ENCODE measurements at regions of chr11 and their contacts with region 1.

Region 1: GRCh38 chr11:130002846-130003716 is 446 bp upstream of the PRDM10 start:
- DNase-seq: peak; percentile 95 to 98 (median 96)
- H3K4me3 ChIP-seq: peak overlapping the region in 3 of 4 donors; percentile 68 to 78 (median 77)
- H3K27ac ChIP-seq: peak overlapping the region; percentile 94 to 99 (median 99)
- H3K4me1 ChIP-seq: peaks cover 8 to 26% of the 10 kb centered on the region in 2 donors
- H3K27me3 ChIP-seq: no peaks in the 10 kb centered on the region
- CTCF ChIP-seq: no peak
- POLR2A ChIP-seq: peak; percentile 81 to 91

Region 2: GRCh38 chr11:130061987-130062386 is 58.9 kb after region 1 on chr11:
- intact Hi-C with region 1: loop called in 1 of 2 experiments (anchors 5 kb)
- DNase-seq: no peak
- H3K4me3 ChIP-seq: no peak overlapping the region
- H3K27ac ChIP-seq: no peak overlapping the region
- H3K4me1 ChIP-seq: no peaks in the 10 kb centered on the region
- H3K27me3 ChIP-seq: peaks cover 4% of the 10 kb centered on the region
- CTCF ChIP-seq: no peak
- POLR2A ChIP-seq: no peak

Region 3: DNA sequence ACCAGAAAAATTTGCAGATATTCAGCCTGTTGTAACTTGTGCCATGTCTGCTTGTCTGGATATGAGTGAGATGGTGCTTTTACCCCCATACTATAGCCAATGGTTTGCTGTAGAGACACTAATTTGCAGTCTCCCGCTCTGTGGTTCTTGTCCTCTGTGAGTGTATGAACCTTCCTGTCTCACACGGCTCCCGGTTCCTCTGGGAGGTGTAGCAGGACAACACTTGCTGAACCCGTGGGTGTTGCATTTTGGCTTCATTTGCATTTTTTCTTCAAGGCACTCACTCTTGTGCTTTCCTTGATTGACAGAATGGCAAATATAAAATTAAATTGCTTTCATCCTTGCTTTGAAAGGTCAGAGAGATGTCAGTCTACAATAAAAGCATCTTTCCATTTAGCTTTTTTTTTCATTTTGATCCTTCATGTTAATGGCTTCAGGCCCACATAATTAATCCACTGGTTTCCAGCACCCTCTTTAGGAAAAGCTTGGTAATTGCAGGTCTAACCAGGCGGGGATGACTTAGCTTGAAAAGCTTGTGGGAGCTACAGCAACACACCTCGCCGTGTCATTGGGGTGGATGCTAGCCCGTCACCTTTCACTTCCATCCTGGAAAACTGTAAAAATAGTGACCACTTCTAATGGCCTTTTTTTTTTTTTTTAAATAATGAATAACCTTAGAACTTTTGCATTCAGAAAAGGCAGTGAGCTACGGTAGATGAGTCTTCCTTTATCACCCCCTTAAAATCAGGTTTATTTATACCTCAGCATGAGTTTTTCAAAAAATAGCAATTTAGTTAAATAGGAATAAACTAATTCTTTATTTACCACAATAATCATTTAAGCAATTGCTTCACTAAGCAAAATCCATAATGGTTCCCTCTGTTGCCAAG is 129.1 kb after region 1 on chr11:
- intact Hi-C with region 1: loop called in 1 of 2 experiments (anchors 10 kb)
- DNase-seq: peak; percentile 42 to 77 (median 54)
- H3K4me3 ChIP-seq: no peak overlapping the region
- H3K27ac ChIP-seq: no peak overlapping the region
- H3K4me1 ChIP-seq: no peaks in the 10 kb centered on the region
- H3K27me3 ChIP-seq: no peaks in the 10 kb centered on the region
- CTCF ChIP-seq: peak; percentile 69 to 95 (median 84)
- POLR2A ChIP-seq: no peak